Panc1 (cell line): ENCODE measurements at regions of chr11 and their contacts with region 1.

Region 1: DNA sequence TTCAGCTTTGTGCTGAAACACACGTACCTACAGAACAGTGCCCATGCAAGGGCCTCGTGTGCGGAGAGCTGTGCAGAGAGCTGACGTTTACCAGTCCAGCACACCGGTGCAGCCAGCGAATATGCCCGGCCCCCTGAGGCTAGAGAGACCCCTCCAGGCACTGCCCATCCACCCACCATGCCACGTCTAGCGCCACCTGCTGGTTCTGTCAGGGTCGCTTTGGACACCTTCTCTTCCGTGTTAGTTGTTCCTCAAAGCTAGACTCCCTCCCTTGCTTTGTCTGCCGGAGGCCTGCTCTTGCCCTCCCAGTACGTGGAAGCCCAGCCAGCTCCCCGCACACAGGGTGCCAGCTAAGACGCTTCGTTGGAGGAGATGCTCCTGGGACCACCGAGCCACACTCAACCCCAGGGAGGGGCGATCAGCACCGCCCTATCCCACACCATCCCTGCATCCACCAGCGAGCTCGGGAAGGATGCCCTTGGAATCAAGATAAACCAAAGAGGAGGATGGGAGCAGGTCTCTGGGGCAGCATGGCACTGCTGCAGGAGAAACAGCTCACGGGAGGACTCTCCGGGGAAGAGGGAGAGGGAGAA is 43.4 kb downstream of the CPT1A start:
- DNase-seq: peak; percentile 7
- ATAC-seq: peak; percentile 66
- H3K4me3 ChIP-seq: no peak overlapping the region
- H3K27ac ChIP-seq: no peak overlapping the region
- H3K4me1 ChIP-seq: no peaks in the 10 kb centered on the region
- H3K27me3 ChIP-seq: no peaks in the 10 kb centered on the region
- CTCF ChIP-seq: peak; percentile 92

Region 2: GRCh38 chr11:68584097-68584496 is 214.2 kb before region 1 on chr11:
- CTCF ChIA-PET with region 1: interaction called, 15 read pairs
- POLR2A ChIA-PET with region 1: no interaction called
- in situ Hi-C with region 1: no loop called
- intact Hi-C with region 1: no loop called
- DNase-seq: no peak
- ATAC-seq: peak; percentile 73
- H3K4me3 ChIP-seq: no peak overlapping the region
- H3K27ac ChIP-seq: no peak overlapping the region
- H3K4me1 ChIP-seq: no peaks in the 10 kb centered on the region
- H3K27me3 ChIP-seq: no peaks in the 10 kb centered on the region
- CTCF ChIP-seq: peak; percentile 91

Region 3: GRCh38 chr11:69253028-69253427 is 454.7 kb after region 1 on chr11:
- CTCF ChIA-PET with region 1: no interaction called
- POLR2A ChIA-PET with region 1: no interaction called
- in situ Hi-C with region 1: no loop called
- intact Hi-C with region 1: no loop called
- DNase-seq: no peak
- ATAC-seq: peak; percentile 60
- H3K4me3 ChIP-seq: no peak overlapping the region
- H3K27ac ChIP-seq: no peak overlapping the region
- H3K4me1 ChIP-seq: no peaks in the 10 kb centered on the region
- H3K27me3 ChIP-seq: no peaks in the 10 kb centered on the region
- CTCF ChIP-seq: no peak

Region 4: DNA sequence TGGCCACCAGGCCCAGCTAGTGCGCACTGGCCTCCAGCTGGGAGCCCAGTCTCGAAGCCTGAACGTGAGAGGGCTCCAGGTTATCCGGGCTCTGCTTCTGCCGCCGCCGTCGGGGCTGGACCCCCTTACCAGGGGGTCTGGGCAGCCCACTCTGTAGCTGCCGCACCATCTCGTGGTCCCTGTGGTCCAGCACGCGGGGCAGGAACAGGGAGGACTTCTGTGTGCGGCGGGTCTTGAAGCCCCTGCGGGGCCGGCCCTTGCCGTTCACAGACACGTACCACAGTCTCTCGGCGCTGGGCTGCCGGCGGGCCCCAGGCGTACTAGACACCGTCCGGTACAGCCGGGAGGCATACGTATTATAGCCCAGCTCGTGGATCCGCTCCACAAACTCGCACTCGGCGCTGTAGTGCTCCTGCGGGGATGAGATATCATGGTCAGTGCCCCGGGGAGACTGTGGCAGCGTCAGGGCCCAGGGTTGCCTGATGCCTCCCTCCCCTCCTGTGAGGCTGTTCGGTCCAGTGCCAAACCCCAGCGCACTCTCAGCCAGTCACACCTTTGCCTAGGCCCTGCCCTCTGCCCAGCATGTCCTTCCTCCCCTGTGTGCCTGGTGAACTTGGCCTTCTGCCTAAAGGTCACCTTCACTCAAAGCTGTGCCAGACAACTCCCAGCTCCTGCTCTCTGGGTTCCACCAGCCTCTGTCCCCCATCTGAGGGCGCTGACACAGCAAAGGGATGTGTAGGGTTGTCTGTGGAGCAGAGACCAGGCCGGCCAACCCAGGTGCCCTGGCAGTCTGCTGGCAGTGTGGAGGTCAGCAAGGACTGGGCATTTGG is 1012.2 kb after region 1 on chr11:
- CTCF ChIA-PET with region 1: interaction called, 10 read pairs
- POLR2A ChIA-PET with region 1: no interaction called
- in situ Hi-C with region 1: no loop called
- intact Hi-C with region 1: no loop called
- DNase-seq: no peak
- ATAC-seq: peak; percentile 35
- H3K4me3 ChIP-seq: no peak overlapping the region
- H3K27ac ChIP-seq: no peak overlapping the region
- H3K4me1 ChIP-seq: no peaks in the 10 kb centered on the region
- H3K27me3 ChIP-seq: peaks cover 5% of the 10 kb centered on the region
- CTCF ChIP-seq: no peak